Activated CD4-positive, alpha-beta memory T cell treated with anti-CD3 and anti-CD28 coated beads for 36 hours (primary cell): ENCODE measurements at regions of chr11 and their contacts with region 1.

Region 1: DNA sequence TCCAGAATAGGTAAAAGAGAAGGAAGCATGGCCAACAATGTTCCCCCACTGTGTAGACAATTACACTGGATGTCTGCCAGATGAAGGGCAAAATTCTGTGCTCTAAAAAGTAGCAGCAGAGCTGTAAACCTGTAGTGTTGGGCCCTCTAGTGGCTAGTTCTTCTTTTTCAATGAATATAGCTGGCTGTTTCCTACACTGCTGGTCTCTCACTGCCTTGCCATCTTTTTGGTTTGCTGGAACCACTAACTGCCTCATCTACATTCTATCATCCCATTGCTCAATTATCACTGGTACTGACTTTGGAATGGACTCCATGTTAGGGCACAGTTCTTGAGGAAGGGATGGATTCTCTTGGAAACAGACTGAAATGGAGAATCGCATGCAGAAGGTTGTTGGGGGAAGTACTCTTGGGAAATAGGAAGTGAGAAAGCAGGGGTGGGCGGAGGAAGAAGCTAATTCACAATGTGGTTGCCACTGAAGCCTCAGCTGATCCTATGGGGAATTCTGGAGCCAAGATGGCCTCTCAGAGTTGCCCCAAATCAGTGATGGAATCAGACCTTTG is 17.9 kb downstream of the KCNE3 start:
- DNase-seq: peak; percentile 35
- H3K4me3 Mint-ChIP-seq: no peak overlapping the region
- H3K27ac Mint-ChIP-seq: no peak overlapping the region
- H3K4me1 Mint-ChIP-seq: no peaks in the 10 kb centered on the region
- H3K27me3 Mint-ChIP-seq: peaks cover 8% of the 10 kb centered on the region

Region 2: DNA sequence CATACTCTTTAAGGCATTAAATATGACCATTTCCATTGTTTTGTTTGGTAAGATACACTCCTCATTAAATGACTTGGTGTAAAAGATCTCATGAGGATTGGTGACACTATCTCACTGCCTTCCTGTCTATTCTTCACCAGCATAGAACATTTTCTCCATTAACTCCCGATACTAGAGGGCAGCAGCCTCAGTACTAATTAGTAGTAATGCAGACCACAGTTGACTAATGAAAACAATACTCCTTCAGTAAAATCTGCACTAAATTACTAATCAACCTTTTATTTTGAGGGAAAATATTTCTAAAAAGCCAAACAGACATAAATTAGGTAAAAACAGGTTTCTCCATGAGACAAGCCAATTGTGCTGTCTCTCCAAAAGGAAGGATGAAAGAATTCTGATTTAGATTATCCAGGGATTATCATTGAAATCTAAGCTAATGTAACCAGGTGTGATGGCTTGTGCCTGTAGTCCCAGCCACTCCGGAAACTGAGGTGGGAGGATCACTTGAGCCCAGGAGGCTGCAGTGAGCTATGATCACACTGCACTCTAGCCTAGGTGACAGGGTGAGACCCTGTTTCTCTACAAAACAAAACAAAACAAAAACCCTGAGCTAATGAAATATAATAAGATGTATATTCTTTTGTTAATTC is 60.6 kb before region 1 on chr11:
- CTCF ChIA-PET with region 1: interaction called, 100 read pairs
- POLR2A ChIA-PET with region 1: no interaction called
- intact Hi-C with region 1: loop called (anchors 1 kb)
- DNase-seq: peak; percentile 68
- H3K4me3 Mint-ChIP-seq: no peak overlapping the region
- H3K27ac Mint-ChIP-seq: peak overlapping the region; percentile 4
- H3K4me1 Mint-ChIP-seq: peaks cover 31% of the 10 kb centered on the region
- H3K27me3 Mint-ChIP-seq: no peaks in the 10 kb centered on the region

Region 3: DNA sequence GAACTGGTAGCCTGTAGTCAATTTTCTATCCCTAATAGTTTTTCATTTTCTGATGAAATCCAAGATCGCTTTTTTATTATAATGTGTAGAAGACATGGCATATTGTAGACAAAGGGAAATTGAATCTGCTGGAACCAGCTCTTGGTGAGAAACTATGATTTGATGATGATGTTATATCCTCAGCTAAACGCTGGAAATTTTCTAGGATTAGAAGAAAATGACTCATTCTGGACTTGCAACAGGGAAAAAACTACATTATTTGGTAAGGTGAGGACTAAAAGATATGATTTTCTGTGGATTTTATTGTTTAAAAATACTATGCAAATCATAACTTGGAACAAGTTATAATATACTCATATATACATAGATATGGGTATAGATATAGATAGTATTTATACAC is 37.1 kb before region 1 on chr11:
- CTCF ChIA-PET with region 1: interaction called, 10 read pairs
- POLR2A ChIA-PET with region 1: no interaction called
- intact Hi-C with region 1: no loop called
- DNase-seq: no peak
- H3K4me3 Mint-ChIP-seq: no peak overlapping the region
- H3K27ac Mint-ChIP-seq: no peak overlapping the region
- H3K4me1 Mint-ChIP-seq: peaks cover 11% of the 10 kb centered on the region
- H3K27me3 Mint-ChIP-seq: peaks cover 2% of the 10 kb centered on the region

Region 4: GRCh38 chr11:74437441-74438042 is 11.9 kb before region 1 on chr11:
- CTCF ChIA-PET with region 1: interaction called, 25 read pairs
- POLR2A ChIA-PET with region 1: no interaction called
- intact Hi-C with region 1: no loop called
- DNase-seq: no peak
- H3K4me3 Mint-ChIP-seq: no peak overlapping the region
- H3K27ac Mint-ChIP-seq: no peak overlapping the region
- H3K4me1 Mint-ChIP-seq: no peaks in the 10 kb centered on the region
- H3K27me3 Mint-ChIP-seq: no peaks in the 10 kb centered on the region

Region 5: DNA sequence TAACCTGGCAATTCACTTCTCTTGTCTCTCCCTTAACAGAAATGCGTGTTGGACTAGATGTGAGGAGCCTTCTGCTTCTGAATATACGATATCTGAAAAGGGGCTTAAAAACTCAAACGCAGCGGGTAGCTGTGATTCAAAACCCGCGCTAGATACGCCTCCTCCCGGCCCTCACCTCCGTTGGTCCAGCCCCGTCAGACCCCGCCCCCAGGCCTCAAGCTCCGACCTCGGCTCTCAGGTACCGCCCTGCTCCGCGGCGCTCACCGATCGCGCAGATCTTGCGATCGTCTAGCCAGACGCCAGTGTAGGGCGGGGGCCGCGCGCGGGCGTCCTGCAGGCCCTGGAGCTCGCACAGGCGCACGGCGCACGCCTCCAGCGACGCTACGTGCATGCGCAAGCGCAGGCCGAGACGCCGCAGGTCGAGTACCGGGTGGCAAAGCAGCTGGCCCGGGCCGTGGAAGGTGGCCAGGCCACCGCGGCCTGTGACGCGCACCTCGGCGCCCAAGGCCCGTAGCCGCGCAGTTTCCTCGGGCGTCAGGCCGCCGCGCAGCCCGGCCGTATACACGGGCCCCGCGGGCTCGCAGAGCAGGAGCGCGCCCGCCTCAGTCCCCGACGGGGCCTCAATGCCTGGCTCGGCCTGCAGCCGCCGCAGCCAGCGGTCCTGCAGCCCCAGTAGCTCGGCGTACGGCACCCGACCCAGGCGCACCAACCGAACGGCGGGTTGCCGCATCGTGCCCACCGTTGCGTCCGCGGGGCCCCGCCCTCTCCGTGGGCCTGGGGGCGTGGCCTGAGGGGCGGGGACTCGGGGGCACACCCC is 43.7 kb after region 1 on chr11 and contains the start of gene LIPT2:
- CTCF ChIA-PET with region 1: interaction called, 16 read pairs
- POLR2A ChIA-PET with region 1: no interaction called
- intact Hi-C with region 1: no loop called
- DNase-seq: peak; percentile 99
- H3K4me3 Mint-ChIP-seq: peak within 1 kb of the TSS; percentile 81
- H3K27ac Mint-ChIP-seq: peak within 1 kb of the TSS; percentile 91
- H3K4me1 Mint-ChIP-seq: peaks cover 22% of the 10 kb centered on the region
- H3K27me3 Mint-ChIP-seq: no peaks in the 10 kb centered on the region
- total RNA-seq, gene LIPT2: 3.0 to 3.3 TPM

Region 6: GRCh38 chr11:74641289-74641688 is 191.8 kb after region 1 on chr11:
- CTCF ChIA-PET with region 1: no interaction called
- POLR2A ChIA-PET with region 1: no interaction called
- intact Hi-C with region 1: no loop called
- DNase-seq: no peak
- H3K4me3 Mint-ChIP-seq: no peak overlapping the region
- H3K27ac Mint-ChIP-seq: no peak overlapping the region
- H3K4me1 Mint-ChIP-seq: peaks cover 7% of the 10 kb centered on the region
- H3K27me3 Mint-ChIP-seq: no peaks in the 10 kb centered on the region